Left cardiac atrium (tissue), 4 donors: ENCODE measurements at regions of chr10 and their contacts with region 1.

Region 1: GRCh38 chr10:79929409-79929904 is 19.4 kb downstream of the SFTPD start:
- DNase-seq: peak; percentile 86
- ATAC-seq: peak; percentile 90 to 93

Region 2: GRCh38 chr10:79562135-79562756 is 367.2 kb before region 1 on chr10:
- intact Hi-C with region 1: loop called in 1 of 2 experiments (anchors 5 kb)
- DNase-seq: peak; percentile 58
- ATAC-seq: peak; percentile 84

Region 3: DNA sequence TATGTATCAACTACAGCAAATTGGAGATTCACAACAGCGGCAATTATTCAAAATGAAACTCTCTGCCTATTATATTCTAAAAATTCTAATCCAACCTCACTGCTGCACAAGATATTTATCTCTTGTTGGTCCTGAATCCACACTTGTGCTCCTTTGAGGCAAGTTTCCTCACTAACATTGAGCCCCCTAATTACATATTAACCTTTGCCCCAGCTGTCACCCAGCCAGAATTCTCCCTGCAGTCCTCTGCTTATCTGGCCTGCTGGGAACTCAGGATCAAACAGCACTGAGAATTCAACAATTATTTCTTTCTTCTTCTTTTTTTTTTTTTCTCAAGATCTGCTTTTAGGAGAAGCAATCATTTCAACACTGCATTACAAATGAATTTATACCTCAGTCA is 181.5 kb after region 1 on chr10:
- intact Hi-C with region 1: no loop called
- DNase-seq: no peak
- ATAC-seq: no peak